Naive thymus-derived CD8-positive, alpha-beta T cell (primary cell): ENCODE measurements at regions of chr7 and their contacts with region 1.

Region 1: GRCh38 chr7:65006094-65006992 is at the start of gene ERV3-1:
- DNase-seq: peak; percentile 76 to 98 (median 93)
- ATAC-seq: peak; percentile 98 to 99
- H3K4me3 Mint-ChIP-seq: peak within 1 kb of the TSS; percentile 91 to 98 (median 94)
- H3K27ac Mint-ChIP-seq: peak within 1 kb of the TSS; percentile 91 to 98 (median 96)
- H3K4me1 Mint-ChIP-seq: peaks cover 8 to 55% (median 35%) of the 10 kb centered on the region in 4 donors
- H3K27me3 Mint-ChIP-seq: no peaks in the 10 kb centered on the region
- polyA plus RNA-seq, gene ERV3-1: 6.4 to 6.7 (median 6.4) TPM

Region 2: GRCh38 chr7:65037740-65038678 is 31.7 kb after region 1 on chr7:
- POLR2A ChIA-PET with region 1: interaction called, 45 read pairs
- DNase-seq: peak; percentile 77 to 95 (median 91)
- ATAC-seq: peak; percentile 86
- H3K4me3 Mint-ChIP-seq: peak overlapping the region; percentile 70 to 89 (median 76)
- H3K27ac Mint-ChIP-seq: peak overlapping the region; percentile 57 to 92 (median 86)
- H3K4me1 Mint-ChIP-seq: peaks cover 6 to 20% (median 13%) of the 10 kb centered on the region in 4 donors
- H3K27me3 Mint-ChIP-seq: no peaks in the 10 kb centered on the region

Region 3: DNA sequence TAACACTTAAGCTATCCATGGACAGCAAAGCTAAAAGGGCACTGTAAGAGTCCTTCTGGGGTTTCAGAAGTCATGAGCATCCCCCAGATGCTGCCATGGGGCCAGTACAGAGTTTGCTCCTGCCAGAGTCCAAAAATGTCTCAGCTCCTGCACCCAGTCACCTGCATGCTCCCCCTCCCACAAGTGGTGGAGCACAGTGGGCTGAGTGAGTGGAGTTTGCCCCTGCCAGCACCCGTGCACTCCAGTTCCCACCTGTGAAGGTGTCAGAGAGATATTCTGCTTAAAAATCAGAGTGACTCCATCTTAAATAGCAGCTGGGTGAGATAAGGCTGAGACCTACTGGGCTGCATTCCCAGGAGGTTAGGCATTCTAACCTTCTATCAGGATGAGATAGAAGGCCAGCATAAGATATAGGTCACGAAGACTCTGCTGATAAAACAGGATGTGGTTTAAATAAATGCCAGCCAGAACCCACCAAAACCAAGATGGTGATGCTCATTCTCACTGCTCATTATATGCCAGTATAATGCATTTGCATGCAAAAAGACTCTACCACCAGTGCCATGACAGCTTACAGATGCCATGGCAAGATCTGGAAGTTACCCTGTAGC is 227.2 kb after region 1 on chr7:
- POLR2A ChIA-PET with region 1: no interaction called
- DNase-seq: no peak
- ATAC-seq: no peak
- H3K4me3 Mint-ChIP-seq: peak overlapping the region in 1 of 10 donors; percentile 28
- H3K27ac Mint-ChIP-seq: no peak overlapping the region
- H3K4me1 Mint-ChIP-seq: peaks cover 6 to 29% (median 15%) of the 10 kb centered on the region in 4 donors
- H3K27me3 Mint-ChIP-seq: peaks cover 0 to 27% (median 6%) of the 10 kb centered on the region in 5 donors

Region 4: GRCh38 chr7:65373608-65374351 is 367.4 kb after region 1 on chr7 and contains the start of gene ZNF92:
- POLR2A ChIA-PET with region 1: interaction called, 17 read pairs
- DNase-seq: peak; percentile 81 to 97 (median 94)
- ATAC-seq: peak; percentile 97
- H3K4me3 Mint-ChIP-seq: peak within 1 kb of the TSS; percentile 93 to 99 (median 96)
- H3K27ac Mint-ChIP-seq: peak within 1 kb of the TSS; percentile 86 to 97 (median 95)
- H3K4me1 Mint-ChIP-seq: peaks cover 15 to 49% (median 44%) of the 10 kb centered on the region in 4 donors
- H3K27me3 Mint-ChIP-seq: no peaks in the 10 kb centered on the region
- polyA plus RNA-seq, gene ZNF92: 7.1 to 15.9 (median 13.2) TPM